Activated CD4-positive, alpha-beta memory T cell treated with anti-CD3 and anti-CD28 coated beads for 36 hours (primary cell): ENCODE measurements at regions of chr2 and their contacts with region 1.

Region 1: GRCh38 chr2:110865188-110865587 is 132.8 kb downstream of the ACOXL start:
- DNase-seq: peak; percentile 61
- H3K4me3 Mint-ChIP-seq: no peak overlapping the region
- H3K27ac Mint-ChIP-seq: no peak overlapping the region
- H3K4me1 Mint-ChIP-seq: peaks cover 32% of the 10 kb centered on the region
- H3K27me3 Mint-ChIP-seq: peaks cover 49% of the 10 kb centered on the region

Region 2: DNA sequence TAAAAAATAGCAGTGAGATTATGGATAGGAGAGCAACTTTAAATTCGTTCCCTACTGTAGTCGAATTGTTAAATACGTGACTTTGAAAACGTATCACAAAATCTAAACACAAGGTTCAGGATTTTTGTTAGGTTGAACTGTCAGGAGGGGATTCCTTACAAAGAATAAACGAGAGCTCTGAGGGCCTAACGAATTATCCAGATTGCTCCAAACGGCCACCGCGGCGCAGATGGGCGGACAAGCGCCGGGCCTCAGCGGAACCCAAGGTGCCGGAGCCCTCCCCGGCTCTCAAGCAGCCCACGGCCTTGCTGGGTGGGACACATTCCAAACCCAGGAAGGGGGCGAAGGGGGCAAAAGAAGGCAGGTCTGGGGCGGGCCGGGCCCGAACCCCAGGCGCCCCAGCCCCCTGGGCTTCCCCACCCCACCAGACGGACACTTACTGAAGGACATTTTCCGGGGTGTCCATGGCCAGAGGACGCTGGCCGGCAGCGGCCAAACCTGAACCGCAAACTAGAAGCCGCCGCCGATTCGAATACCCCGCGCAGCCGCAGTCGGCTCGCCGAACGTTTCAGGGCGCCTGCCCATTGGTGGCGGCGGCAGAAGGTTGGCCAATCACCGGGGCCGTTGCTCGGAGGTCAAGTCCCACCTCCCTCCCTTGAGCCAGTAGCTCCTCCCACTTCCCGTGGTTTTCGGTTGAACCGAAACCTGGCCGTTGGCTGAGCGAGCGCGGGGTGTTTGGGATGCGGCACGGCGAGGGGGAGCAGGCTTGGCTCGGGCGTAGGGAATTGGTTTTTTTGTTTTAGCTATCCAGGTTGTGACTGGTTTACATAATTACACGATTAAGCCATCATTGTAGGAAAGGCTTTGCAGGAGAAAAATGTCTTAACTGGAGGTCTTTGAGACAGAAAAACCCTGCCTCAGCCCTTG is 187.4 kb before region 1 on chr2 and contains the start of gene BUB1:
- CTCF ChIA-PET with region 1: no interaction called
- POLR2A ChIA-PET with region 1: no interaction called
- intact Hi-C with region 1: loop called (anchors 10 kb)
- DNase-seq: peak; percentile 97
- H3K4me3 Mint-ChIP-seq: peak within 1 kb of the TSS; percentile 94
- H3K27ac Mint-ChIP-seq: peak within 1 kb of the TSS; percentile 96
- H3K4me1 Mint-ChIP-seq: peaks cover 21% of the 10 kb centered on the region
- H3K27me3 Mint-ChIP-seq: no peaks in the 10 kb centered on the region
- total RNA-seq, gene BUB1: 90.8 to 102 TPM

Region 3: DNA sequence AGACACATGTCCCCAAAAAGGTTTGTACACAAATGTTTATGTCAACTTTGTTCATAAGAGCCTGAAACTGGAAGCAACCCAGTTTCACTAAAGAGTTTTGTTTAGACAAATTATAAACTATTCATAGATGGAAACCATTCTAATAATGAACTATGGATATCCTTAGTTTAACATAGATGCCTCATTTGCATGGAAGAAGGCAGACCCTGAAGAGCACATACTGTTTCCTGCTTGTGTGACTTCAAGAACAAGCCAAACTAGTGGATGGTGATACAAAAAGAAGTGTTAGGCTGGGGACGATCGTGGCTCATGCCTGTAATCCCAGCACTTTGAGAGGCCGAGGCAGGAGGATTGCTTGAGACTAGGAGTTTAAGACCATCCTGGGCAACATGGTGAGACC is 84.7 kb before region 1 on chr2:
- CTCF ChIA-PET with region 1: no interaction called
- POLR2A ChIA-PET with region 1: no interaction called
- intact Hi-C with region 1: no loop called
- DNase-seq: no peak
- H3K4me3 Mint-ChIP-seq: no peak overlapping the region
- H3K27ac Mint-ChIP-seq: no peak overlapping the region
- H3K4me1 Mint-ChIP-seq: no peaks in the 10 kb centered on the region
- H3K27me3 Mint-ChIP-seq: peaks cover 31% of the 10 kb centered on the region

Region 4: GRCh38 chr2:110804915-110805314 is 60.3 kb before region 1 on chr2:
- CTCF ChIA-PET with region 1: no interaction called
- POLR2A ChIA-PET with region 1: no interaction called
- intact Hi-C with region 1: loop called (anchors 2 kb)
- DNase-seq: peak; percentile 85
- H3K4me3 Mint-ChIP-seq: peak overlapping the region; percentile 3
- H3K27ac Mint-ChIP-seq: peak overlapping the region; percentile 29
- H3K4me1 Mint-ChIP-seq: peaks cover 16% of the 10 kb centered on the region
- H3K27me3 Mint-ChIP-seq: peaks cover 43% of the 10 kb centered on the region

Region 5: GRCh38 chr2:110853507-110853906 is 11.7 kb before region 1 on chr2:
- CTCF ChIA-PET with region 1: interaction called, 12 read pairs
- POLR2A ChIA-PET with region 1: no interaction called
- intact Hi-C with region 1: loop called (anchors 1 kb)
- DNase-seq: peak; percentile 72
- H3K4me3 Mint-ChIP-seq: no peak overlapping the region
- H3K27ac Mint-ChIP-seq: no peak overlapping the region
- H3K4me1 Mint-ChIP-seq: peaks cover 46% of the 10 kb centered on the region
- H3K27me3 Mint-ChIP-seq: peaks cover 39% of the 10 kb centered on the region

Region 6: GRCh38 chr2:111049792-111050640 is 184.8 kb after region 1 on chr2:
- CTCF ChIA-PET with region 1: no interaction called
- POLR2A ChIA-PET with region 1: no interaction called
- intact Hi-C with region 1: loop called (anchors 2 kb)
- DNase-seq: peak; percentile 46
- H3K4me3 Mint-ChIP-seq: no peak overlapping the region
- H3K27ac Mint-ChIP-seq: no peak overlapping the region
- H3K4me1 Mint-ChIP-seq: peaks cover 38% of the 10 kb centered on the region
- H3K27me3 Mint-ChIP-seq: peaks cover 65% of the 10 kb centered on the region

Region 7: GRCh38 chr2:111111101-111111755 is 246.0 kb after region 1 on chr2:
- CTCF ChIA-PET with region 1: no interaction called
- POLR2A ChIA-PET with region 1: no interaction called
- intact Hi-C with region 1: loop called (anchors 1 kb)
- DNase-seq: peak; percentile 57
- H3K4me3 Mint-ChIP-seq: no peak overlapping the region
- H3K27ac Mint-ChIP-seq: no peak overlapping the region
- H3K4me1 Mint-ChIP-seq: peaks cover 28% of the 10 kb centered on the region
- H3K27me3 Mint-ChIP-seq: peaks cover 58% of the 10 kb centered on the region